PC-9 (cell line): ENCODE measurements at regions of chr2 and their contacts with region 1.

Region 1: GRCh38 chr2:231056453-231057424 is at the start of gene PSMD1:
- DNase-seq: peak; percentile 71 to 90
- H3K4me3 ChIP-seq: peak within 1 kb of the TSS; percentile 95
- H3K27ac ChIP-seq: peak within 1 kb of the TSS; percentile 80
- H3K4me1 ChIP-seq: peaks cover 24% of the 10 kb centered on the region
- H3K27me3 ChIP-seq: no peaks in the 10 kb centered on the region
- CTCF ChIP-seq: peak; percentile 92
- total RNA-seq, gene PSMD1: 80.6 and 119 TPM in 2 replicates

Region 2: GRCh38 chr2:230758566-230759480 is 297.9 kb before region 1 on chr2:
- CTCF ChIA-PET with region 1: no interaction called
- POLR2A ChIA-PET with region 1: interaction called, 28 read pairs
- intact Hi-C with region 1: no loop called
- DNase-seq: peak in 1 of 2 experiments; percentile 61
- H3K4me3 ChIP-seq: no peak overlapping the region
- H3K27ac ChIP-seq: peak overlapping the region; percentile 52
- H3K4me1 ChIP-seq: peaks cover 30% of the 10 kb centered on the region
- H3K27me3 ChIP-seq: no peaks in the 10 kb centered on the region
- CTCF ChIP-seq: no peak

Region 3: GRCh38 chr2:230781130-230781797 is 275.5 kb before region 1 on chr2:
- CTCF ChIA-PET with region 1: no interaction called
- POLR2A ChIA-PET with region 1: no interaction called
- intact Hi-C with region 1: no loop called
- DNase-seq: peak; percentile 80 to 98
- H3K4me3 ChIP-seq: peak overlapping the region; percentile 32; the same call in 1 of the 2 replicates
- H3K27ac ChIP-seq: peak overlapping the region; percentile 91
- H3K4me1 ChIP-seq: peaks cover 63% of the 10 kb centered on the region
- H3K27me3 ChIP-seq: no peaks in the 10 kb centered on the region
- CTCF ChIP-seq: no peak

Region 4: GRCh38 chr2:230902180-230902899 is 154.4 kb before region 1 on chr2:
- CTCF ChIA-PET with region 1: no interaction called
- POLR2A ChIA-PET with region 1: no interaction called
- intact Hi-C with region 1: loop called (anchors 1 kb)
- DNase-seq: peak in 1 of 2 experiments; percentile 43
- H3K4me3 ChIP-seq: no peak overlapping the region
- H3K27ac ChIP-seq: no peak overlapping the region
- H3K4me1 ChIP-seq: no peaks in the 10 kb centered on the region
- H3K27me3 ChIP-seq: peaks cover 35% of the 10 kb centered on the region
- CTCF ChIP-seq: peak; percentile 84